Cardiac septum (tissue), 1 donor: ENCODE measurements at regions of chr16 and their contacts with region 1.

Region 1: GRCh38 chr16:30698139-30698815 is 694 bp upstream of the SRCAP start:
- DNase-seq: peak; percentile 99

Region 2: GRCh38 chr16:30650369-30651123 is 47.7 kb before region 1 on chr16 and contains the start of gene PRR14:
- intact Hi-C with region 1: loop called (anchors 5 kb)
- DNase-seq: peak; percentile 100
- total RNA-seq, gene PRR14: 21.1 TPM